SK-N-SH (cell line): ENCODE measurements at regions of chr7 and their contacts with region 1.

Region 1: GRCh38 chr7:26705567-26705966 is 158.8 kb downstream of the SKAP2 start:
- DNase-seq: peak; percentile 64
- H3K4me3 ChIP-seq: no peak overlapping the region
- H3K27ac ChIP-seq: peak overlapping the region in 1 of 2 experiments; percentile 47; a peak in 1 of 4 replicates
- H3K4me1 ChIP-seq: peaks cover 6 to 16% of the 10 kb centered on the region in 2 experiments; a peak in 2 of 4 replicates
- H3K27me3 ChIP-seq: no peaks in the 10 kb centered on the region
- CTCF ChIP-seq: no peak
- EP300 ChIP-seq: peak in 1 of 2 experiments; percentile 61; a peak in 1 of 4 replicates
- RAD21 ChIP-seq: no peak

Region 2: DNA sequence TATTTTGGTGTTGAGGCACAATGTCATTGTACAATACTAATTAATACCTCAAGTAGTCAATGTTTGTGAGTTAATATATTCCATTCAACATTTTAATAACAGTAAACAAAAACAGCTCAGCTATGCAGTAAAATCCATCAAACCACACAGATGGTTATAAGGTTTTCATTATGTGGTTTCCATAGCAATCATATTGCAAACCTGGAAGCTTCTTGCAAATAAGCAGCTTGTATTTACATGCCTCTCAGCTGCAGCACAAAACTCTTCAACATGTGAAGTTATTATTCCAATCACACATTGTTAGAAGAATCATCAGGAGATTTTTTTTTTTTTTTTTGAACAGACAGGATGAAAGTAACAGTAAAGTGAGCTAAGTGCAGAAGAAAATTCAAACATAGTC is 11.4 kb before region 1 on chr7:
- CTCF ChIA-PET with region 1: interaction called, 17 read pairs
- POLR2A ChIA-PET with region 1: no interaction called
- DNase-seq: peak; percentile 26
- H3K4me3 ChIP-seq: no peak overlapping the region
- H3K27ac ChIP-seq: no peak overlapping the region
- H3K4me1 ChIP-seq: peaks cover 0 to 9% of the 10 kb centered on the region in 2 experiments; a peak in 2 of 4 replicates
- H3K27me3 ChIP-seq: peaks cover 4% of the 10 kb centered on the region; the same call in 1 of the 2 replicates
- CTCF ChIP-seq: no peak
- EP300 ChIP-seq: no peak
- RAD21 ChIP-seq: no peak

Region 3: GRCh38 chr7:26910221-26910620 is 204.7 kb after region 1 on chr7:
- CTCF ChIA-PET with region 1: no interaction called
- POLR2A ChIA-PET with region 1: no interaction called
- DNase-seq: no peak
- H3K4me3 ChIP-seq: no peak overlapping the region
- H3K27ac ChIP-seq: no peak overlapping the region
- H3K4me1 ChIP-seq: no peaks in the 10 kb centered on the region
- H3K27me3 ChIP-seq: peaks cover 24% of the 10 kb centered on the region; the same call in 1 of the 2 replicates
- CTCF ChIP-seq: no peak
- EP300 ChIP-seq: no peak
- RAD21 ChIP-seq: no peak

Region 4: DNA sequence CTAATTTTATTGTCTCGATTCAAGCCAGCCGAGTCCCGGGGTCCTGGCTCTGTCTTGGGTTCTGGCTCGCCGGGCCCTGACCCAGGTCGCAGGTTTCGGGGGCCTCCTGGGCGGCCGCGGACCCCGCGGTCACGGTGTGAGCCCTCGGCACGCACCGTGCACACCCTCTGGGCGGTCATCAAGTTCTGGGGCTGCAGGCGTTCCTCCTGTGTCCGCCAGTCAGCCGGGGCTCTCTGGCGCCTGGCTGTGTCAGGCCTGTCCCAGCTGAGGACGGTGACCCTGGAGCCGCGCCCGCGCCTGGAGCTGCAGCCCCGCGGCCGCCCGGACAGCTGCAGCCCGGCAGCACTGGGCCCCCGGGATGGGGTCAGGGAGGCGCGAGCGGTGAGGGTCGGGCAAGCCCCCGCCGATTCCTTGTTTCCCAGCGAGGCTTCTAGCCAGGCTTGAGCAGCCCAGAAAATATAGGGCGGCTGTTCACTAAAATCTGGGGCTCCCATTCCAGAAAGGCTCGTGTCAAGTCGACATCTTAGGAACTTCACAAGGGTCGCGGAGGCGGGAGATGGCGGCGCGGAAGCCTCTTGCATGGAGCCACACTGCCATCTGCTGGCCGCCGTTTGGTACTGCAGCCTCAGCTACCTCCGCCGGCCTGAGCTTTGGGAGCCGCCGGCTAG is 455.1 kb after region 1 on chr7:
- CTCF ChIA-PET with region 1: interaction called, 17 read pairs
- POLR2A ChIA-PET with region 1: no interaction called
- DNase-seq: peak; percentile 96
- H3K4me3 ChIP-seq: peak overlapping the region; percentile 39 to 70
- H3K27ac ChIP-seq: no peak overlapping the region
- H3K4me1 ChIP-seq: peaks cover 0 to 8% of the 10 kb centered on the region in 2 experiments; a peak in 1 of 4 replicates
- H3K27me3 ChIP-seq: peaks cover 91% of the 10 kb centered on the region
- CTCF ChIP-seq: peak; percentile 99
- EP300 ChIP-seq: no peak
- RAD21 ChIP-seq: peak; percentile 94